GM12878 (cell line): ENCODE measurements at regions of chr14 and their contacts with region 1.

Region 1: GRCh38 chr14:102316743-102317563 is 2.6 kb upstream of the ZNF839 start:
- DNase-seq: peak; percentile 61
- ATAC-seq: peak; percentile 83
- H3K4me3 ChIP-seq: peak overlapping the region; percentile 75
- H3K27ac ChIP-seq: peak overlapping the region; percentile 61; the same call in 1 of the 2 replicates
- H3K4me1 ChIP-seq: peaks cover 27% of the 10 kb centered on the region
- H3K27me3 ChIP-seq: no peaks in the 10 kb centered on the region
- CTCF ChIP-seq: peak; percentile 84 to 93 (median 89)
- EP300 ChIP-seq: peak in 1 of 2 experiments; percentile 45; a peak in 1 of 4 replicates
- POLR2A ChIP-seq: no peak
- RAD21 ChIP-seq: no peak

Region 2: DNA sequence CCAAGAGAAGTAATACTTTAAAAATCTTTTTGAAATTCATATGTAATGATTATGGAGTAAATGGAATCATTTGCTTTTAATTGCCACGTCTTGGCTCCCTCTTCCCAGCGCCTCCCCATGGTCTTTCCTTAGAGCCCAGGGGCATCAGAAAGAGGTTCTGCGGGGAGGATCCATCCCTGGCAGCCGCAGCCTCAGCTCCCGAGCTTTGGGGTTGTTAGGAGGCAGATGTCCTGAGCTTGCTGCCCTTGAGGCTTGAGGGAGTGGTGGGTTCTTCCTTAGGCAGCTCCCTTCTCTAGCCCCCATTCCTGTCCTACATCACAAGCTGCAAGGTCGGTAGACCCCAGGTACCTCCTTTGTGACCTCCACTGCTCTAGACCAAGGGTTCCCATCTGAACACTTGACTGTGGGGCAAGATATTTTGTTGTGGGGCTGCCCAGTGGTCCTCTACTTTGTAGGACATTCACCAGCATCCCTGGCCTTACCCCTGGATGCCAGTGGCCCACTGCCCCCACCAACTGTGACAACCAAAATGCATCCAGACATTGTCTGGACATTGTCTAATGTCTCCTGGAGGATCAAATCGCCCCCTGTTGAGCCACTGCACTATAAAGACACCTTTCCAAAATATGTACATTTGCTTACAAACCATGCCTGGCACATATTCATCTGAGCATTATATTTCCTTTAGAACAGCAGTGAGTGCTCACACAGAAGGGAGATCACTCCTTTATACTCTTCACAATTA is 549.2 kb before region 1 on chr14:
- CTCF ChIA-PET with region 1: interaction called, 11 read pairs
- POLR2A ChIA-PET with region 1: interaction called, 4 read pairs
- RAD21 ChIA-PET with region 1: interaction called, 4 read pairs
- SMC1A ChIA-PET with region 1: no interaction called
- in situ Hi-C with region 1: loop called (anchors 25 kb)
- intact Hi-C with region 1: no loop called
- DNase-seq: no peak
- ATAC-seq: no peak
- H3K4me3 ChIP-seq: no peak overlapping the region
- H3K27ac ChIP-seq: no peak overlapping the region
- H3K4me1 ChIP-seq: no peaks in the 10 kb centered on the region
- H3K27me3 ChIP-seq: no peaks in the 10 kb centered on the region; a peak in 1 of 4 replicates
- CTCF ChIP-seq: no peak
- EP300 ChIP-seq: no peak
- POLR2A ChIP-seq: no peak
- RAD21 ChIP-seq: no peak

Region 3: GRCh38 chr14:102063091-102063802 is 253.7 kb before region 1 on chr14:
- CTCF ChIA-PET with region 1: no interaction called
- POLR2A ChIA-PET with region 1: no interaction called
- RAD21 ChIA-PET with region 1: interaction called, 5 read pairs
- SMC1A ChIA-PET with region 1: no interaction called
- in situ Hi-C with region 1: no loop called
- intact Hi-C with region 1: loop called (anchors 2 kb)
- DNase-seq: peak; percentile 31
- ATAC-seq: peak; percentile 98
- H3K4me3 ChIP-seq: no peak overlapping the region
- H3K27ac ChIP-seq: no peak overlapping the region
- H3K4me1 ChIP-seq: no peaks in the 10 kb centered on the region
- H3K27me3 ChIP-seq: no peaks in the 10 kb centered on the region
- CTCF ChIP-seq: peak; percentile 28 to 48 (median 37); a peak in 4 of 6 replicates
- EP300 ChIP-seq: no peak
- POLR2A ChIP-seq: no peak
- RAD21 ChIP-seq: peak; percentile 45

Region 4: DNA sequence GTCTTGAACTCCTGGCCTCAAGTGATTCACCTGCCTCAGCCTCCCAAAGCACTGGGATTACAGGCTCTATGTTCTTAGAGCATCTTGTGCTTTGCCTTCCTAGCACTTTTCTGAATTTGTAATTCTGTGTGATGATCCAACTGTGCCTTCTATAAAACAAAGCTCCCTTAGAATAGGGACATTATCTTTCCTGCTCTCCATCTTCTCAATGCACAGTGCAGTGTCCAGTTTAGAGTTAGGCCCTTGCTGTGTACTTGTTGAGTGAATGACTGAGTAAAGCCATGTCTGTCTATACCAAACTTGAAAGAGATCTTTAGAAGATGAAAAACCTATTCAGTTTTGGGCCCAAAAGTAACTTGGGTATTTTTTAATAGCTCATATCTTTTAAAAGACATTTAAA is 172.0 kb before region 1 on chr14:
- CTCF ChIA-PET with region 1: interaction called, 10 read pairs
- POLR2A ChIA-PET with region 1: no interaction called
- RAD21 ChIA-PET with region 1: interaction called, 8 read pairs
- SMC1A ChIA-PET with region 1: no interaction called
- in situ Hi-C with region 1: no loop called
- intact Hi-C with region 1: no loop called
- DNase-seq: no peak
- ATAC-seq: no peak
- H3K4me3 ChIP-seq: no peak overlapping the region
- H3K27ac ChIP-seq: no peak overlapping the region
- H3K4me1 ChIP-seq: peaks cover 10% of the 10 kb centered on the region
- H3K27me3 ChIP-seq: no peaks in the 10 kb centered on the region
- CTCF ChIP-seq: no peak
- EP300 ChIP-seq: no peak
- POLR2A ChIP-seq: no peak
- RAD21 ChIP-seq: no peak

Region 5: DNA sequence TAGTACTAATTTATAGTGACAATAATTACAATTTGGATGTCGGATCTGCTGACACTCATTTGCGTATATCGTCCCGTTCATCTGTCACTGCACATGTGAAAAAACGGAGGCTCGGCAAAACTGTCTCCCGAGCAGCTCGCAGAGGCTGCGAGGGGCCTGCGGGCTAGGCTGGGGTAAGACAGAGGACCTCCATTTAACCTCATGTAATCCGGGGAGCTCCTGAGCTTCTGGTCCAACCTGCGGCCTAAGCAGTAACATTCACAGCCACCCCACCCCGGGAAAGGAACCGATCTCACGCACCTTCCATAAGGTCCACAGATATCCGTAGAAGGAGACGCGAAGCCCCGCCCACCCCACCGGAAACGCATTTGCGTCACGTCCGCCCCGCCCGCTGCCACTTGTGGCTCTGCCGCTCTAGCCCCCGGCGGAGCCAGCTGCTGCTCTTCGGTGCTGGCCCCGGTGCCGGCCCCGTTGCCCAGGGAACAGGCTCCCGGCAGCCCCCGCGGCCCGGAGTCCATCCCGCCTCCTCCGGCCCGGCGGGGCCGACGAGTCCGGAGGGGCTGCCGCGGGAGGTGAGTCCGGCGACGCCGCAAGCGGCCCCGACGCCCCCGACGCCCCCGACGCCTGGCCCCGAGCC is 45.7 kb after region 1 on chr14 and contains the starts of genes CINP and TECPR2:
- CTCF ChIA-PET with region 1: interaction called, 14 read pairs
- POLR2A ChIA-PET with region 1: interaction called, 6 read pairs
- RAD21 ChIA-PET with region 1: interaction called, 3 read pairs
- SMC1A ChIA-PET with region 1: interaction called, 3 read pairs
- in situ Hi-C with region 1: no loop called
- intact Hi-C with region 1: loop called (anchors 2 kb)
- DNase-seq: peak; percentile 71
- ATAC-seq: peak; percentile 96
- H3K4me3 ChIP-seq: peak within 1 kb of the TSS; percentile 73
- H3K27ac ChIP-seq: peak within 1 kb of the TSS; percentile 88
- H3K4me1 ChIP-seq: peaks cover 9% of the 10 kb centered on the region
- H3K27me3 ChIP-seq: no peaks in the 10 kb centered on the region
- CTCF ChIP-seq: no peak
- EP300 ChIP-seq: no peak
- POLR2A ChIP-seq: peak; percentile 72; the same call in 1 of the 2 replicates
- RAD21 ChIP-seq: no peak
- polyA plus RNA-seq, gene CINP: 47.9 to 52.6 TPM
- polyA plus RNA-seq, gene TECPR2: 0.15 to 0.26 TPM